Sigmoid colon (tissue), 7 donors: ENCODE measurements at regions of chr1 and their contacts with region 1.

Region 1: DNA sequence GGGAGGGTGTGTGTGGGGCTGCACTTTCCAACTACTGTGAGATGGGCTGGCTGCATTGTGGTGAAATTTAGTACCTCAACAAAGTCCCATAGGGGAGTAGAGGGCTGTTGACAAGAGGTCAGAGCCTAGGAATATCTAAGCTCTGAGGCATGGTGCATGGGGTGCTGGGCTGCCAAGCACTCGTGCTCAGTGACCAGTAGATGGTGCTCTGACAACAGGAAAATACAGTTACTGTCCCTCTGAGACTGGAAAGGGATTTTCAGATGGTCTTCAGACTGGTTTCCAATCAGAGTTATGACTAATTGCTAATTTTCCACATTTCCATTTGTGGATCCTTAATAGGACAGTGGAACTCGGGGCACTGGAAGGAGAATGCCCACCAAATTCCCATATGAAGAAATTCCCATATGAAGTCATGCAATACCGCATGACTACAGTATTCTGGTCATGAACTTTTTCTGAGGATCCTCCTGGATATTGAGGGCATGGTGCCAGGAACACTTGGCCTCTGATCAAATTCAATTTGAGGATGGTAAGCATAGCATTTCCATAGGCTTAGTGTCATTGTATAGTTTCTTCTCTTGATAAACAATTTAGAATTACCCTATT is 4.1 kb upstream of the CACNA1E start:
- DNase-seq: no peak
- H3K4me3 ChIP-seq: no peak overlapping the region
- H3K27ac ChIP-seq: no peak overlapping the region
- H3K4me1 ChIP-seq: peaks cover 0 to 23% (median 16%) of the 10 kb centered on the region in 4 donors
- H3K27me3 ChIP-seq: peaks cover 8 to 38% (median 31%) of the 10 kb centered on the region in 3 donors
- CTCF ChIP-seq: peak; percentile 22 to 74 (median 52)
- EP300 ChIP-seq: no peak
- POLR2A ChIP-seq: no peak

Region 2: DNA sequence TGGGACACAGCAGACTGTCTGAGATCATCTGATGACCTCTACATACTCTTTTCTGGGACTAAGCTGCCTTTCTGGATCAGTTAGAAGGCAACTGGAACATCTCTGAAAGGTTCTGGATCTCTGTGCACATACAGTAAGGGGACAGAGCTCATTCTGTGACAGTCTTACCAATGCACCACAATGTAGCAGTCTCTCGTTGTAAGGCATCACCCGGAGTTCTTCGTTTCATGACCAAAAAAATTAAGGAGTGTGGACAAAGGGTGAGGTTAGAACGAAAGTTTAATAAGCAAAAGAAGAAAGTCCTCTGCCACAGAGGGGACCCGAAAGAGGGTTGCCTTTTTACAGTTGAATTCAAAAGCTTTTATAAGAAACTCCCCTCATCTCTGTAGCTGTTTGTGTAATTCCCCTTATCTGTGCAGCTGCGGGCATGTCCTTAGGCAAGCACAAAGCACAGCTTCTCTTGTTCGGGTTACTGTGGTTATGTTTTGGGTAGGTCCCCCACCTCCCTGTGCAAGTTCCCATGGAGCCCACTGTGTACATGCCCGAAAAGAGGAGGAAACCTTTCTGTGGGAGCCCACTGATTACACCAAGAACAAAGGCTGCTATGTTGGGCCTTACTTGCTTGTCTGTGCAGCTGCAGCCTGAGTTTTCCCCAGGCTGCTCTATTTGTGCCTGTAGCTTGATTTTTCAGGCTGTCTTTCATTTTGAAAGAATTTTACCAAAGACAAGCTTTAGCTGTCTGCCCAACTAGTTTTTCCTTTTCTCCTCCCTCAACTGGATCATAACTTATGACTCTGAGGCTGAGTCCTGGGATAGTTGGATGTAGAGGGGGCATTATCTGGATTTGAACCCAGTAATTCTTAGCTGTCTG is 49.0 kb before region 1 on chr1:
- intact Hi-C with region 1: no loop called
- DNase-seq: no peak
- H3K4me3 ChIP-seq: no peak overlapping the region
- H3K27ac ChIP-seq: no peak overlapping the region
- H3K4me1 ChIP-seq: no peaks in the 10 kb centered on the region
- H3K27me3 ChIP-seq: peaks cover 0 to 15% (median 3%) of the 10 kb centered on the region in 3 donors
- CTCF ChIP-seq: no peak
- EP300 ChIP-seq: no peak
- POLR2A ChIP-seq: no peak

Region 3: GRCh38 chr1:181676269-181676668 is 197.0 kb after region 1 on chr1:
- intact Hi-C with region 1: loop called (anchors 5 kb)
- DNase-seq: no peak
- H3K4me3 ChIP-seq: no peak overlapping the region
- H3K27ac ChIP-seq: no peak overlapping the region
- H3K4me1 ChIP-seq: no peaks in the 10 kb centered on the region
- H3K27me3 ChIP-seq: no peaks in the 10 kb centered on the region
- CTCF ChIP-seq: no peak
- EP300 ChIP-seq: no peak
- POLR2A ChIP-seq: no peak

Region 4: GRCh38 chr1:182054698-182055326 is 575.6 kb after region 1 on chr1:
- intact Hi-C with region 1: loop called (anchors 10 kb)
- DNase-seq: no peak
- H3K4me3 ChIP-seq: no peak overlapping the region
- H3K27ac ChIP-seq: no peak overlapping the region
- H3K4me1 ChIP-seq: no peaks in the 10 kb centered on the region
- H3K27me3 ChIP-seq: peaks cover 0 to 24% (median 7%) of the 10 kb centered on the region in 3 donors
- CTCF ChIP-seq: peak in 2 of 4 experiments; percentile 16 to 35
- EP300 ChIP-seq: no peak
- POLR2A ChIP-seq: no peak